Activated naive CD4-positive, alpha-beta T cell treated with anti-CD3 and anti-CD28 coated beads, Interleukin-2, amount 10 ng/mL, durations not matched to agents 7 days and 5 days (primary cell): ENCODE measurements at regions of chr7 and their contacts with region 1.

Region 1: GRCh38 chr7:2670720-2671391 is 17.1 kb upstream of the AMZ1 start:
- DNase-seq: peak; percentile 77
- H3K4me3 Mint-ChIP-seq: no peak overlapping the region
- H3K27ac Mint-ChIP-seq: no peak overlapping the region
- H3K4me1 Mint-ChIP-seq: peaks cover 11% of the 10 kb centered on the region
- H3K27me3 Mint-ChIP-seq: peaks cover 79% of the 10 kb centered on the region

Region 2: GRCh38 chr7:2519119-2519930 is 151.5 kb before region 1 on chr7 and contains the start of gene LFNG:
- CTCF ChIA-PET with region 1: no interaction called
- DNase-seq: peak; percentile 88
- H3K4me3 Mint-ChIP-seq: peak within 1 kb of the TSS; percentile 97
- H3K27ac Mint-ChIP-seq: peak within 1 kb of the TSS; percentile 88
- H3K4me1 Mint-ChIP-seq: peaks cover 34% of the 10 kb centered on the region
- H3K27me3 Mint-ChIP-seq: peaks cover 25% of the 10 kb centered on the region

Region 3: GRCh38 chr7:2567679-2568278 is 103.1 kb before region 1 on chr7:
- CTCF ChIA-PET with region 1: no interaction called
- DNase-seq: no peak
- H3K4me3 Mint-ChIP-seq: no peak overlapping the region
- H3K27ac Mint-ChIP-seq: no peak overlapping the region
- H3K4me1 Mint-ChIP-seq: peaks cover 2% of the 10 kb centered on the region
- H3K27me3 Mint-ChIP-seq: no peaks in the 10 kb centered on the region

Region 4: DNA sequence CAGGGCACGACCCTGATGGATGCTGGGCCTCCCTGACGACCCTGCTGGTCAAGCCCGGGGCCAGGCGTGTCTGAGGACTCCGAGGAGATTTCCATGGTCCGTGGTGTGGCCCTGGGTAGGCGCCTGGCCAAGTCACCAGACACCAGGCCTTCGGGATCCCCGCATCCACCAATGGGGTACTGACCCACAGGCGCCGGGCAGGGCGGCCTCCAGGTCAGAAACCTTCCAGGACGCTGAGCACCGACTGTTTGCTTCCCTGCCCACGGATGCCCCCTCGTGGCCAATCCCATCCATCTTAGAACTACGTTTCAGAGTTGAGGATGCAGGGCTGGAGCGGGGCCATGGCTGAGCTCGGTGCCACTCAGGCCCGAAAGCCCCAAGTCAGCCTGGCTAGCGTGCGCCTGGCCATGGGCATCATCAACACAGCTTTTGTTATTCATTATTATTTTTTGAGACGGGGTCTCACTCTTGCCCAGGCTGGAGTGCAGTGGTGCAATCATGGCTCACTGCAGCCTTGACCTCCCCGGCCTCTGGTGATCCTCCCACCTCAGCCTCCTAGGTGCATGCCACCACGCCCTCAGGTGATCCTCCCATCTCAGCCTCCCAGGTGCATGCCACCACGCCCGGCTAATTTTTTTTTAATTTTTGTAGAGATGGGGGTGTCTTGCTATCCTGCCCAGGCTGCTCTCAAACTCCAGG is 10.1 kb after region 1 on chr7:
- CTCF ChIA-PET with region 1: interaction called, 17 read pairs
- DNase-seq: peak; percentile 70
- H3K4me3 Mint-ChIP-seq: no peak overlapping the region
- H3K27ac Mint-ChIP-seq: no peak overlapping the region
- H3K4me1 Mint-ChIP-seq: no peaks in the 10 kb centered on the region
- H3K27me3 Mint-ChIP-seq: peaks cover 57% of the 10 kb centered on the region

Region 5: DNA sequence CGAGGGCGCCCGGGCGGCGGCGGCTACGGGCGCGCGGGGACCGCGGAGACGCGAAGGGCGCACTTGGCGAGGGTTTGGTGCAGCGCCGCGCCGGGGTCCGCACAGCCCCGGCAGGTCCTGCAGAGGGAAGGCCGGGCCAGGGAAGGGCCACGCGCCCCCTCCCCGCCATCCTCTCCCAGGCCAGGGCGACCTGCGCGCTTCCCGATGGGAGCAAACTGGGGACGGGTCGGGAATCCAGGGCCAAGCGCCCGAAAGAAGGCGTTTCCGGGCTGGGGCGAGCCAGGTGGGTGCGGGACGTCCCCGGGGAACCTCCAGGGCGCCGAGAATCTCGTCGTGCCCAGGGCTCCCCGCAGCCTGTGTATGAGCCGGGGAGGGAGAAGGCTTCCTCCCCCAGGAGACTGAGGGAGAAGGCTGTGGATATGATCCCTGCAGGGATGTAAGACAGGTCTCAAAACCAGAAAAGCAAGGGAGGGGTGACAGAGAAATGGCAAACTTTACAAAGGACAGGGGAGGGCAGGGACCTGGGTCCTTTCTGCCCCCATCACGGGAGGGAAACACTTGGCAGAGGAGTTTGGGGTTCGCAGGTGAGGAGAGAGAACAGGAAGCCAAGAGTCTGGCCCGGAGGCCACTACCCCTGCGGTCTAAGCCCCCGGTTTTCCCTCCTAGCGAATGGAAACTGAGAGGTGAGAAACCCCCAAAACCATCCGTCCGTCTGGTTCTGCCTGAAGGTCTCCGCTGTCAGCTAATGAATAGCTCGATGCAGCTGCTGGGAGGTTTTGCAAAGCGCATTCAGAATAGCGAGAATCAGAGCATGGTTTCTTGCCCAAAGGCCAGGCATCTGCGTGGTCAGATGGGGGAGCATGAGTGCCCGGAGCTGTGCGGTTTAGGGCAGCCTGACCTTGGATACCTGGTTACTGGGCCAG is 17.8 kb after region 1 on chr7:
- CTCF ChIA-PET with region 1: interaction called, 12 read pairs
- DNase-seq: no peak
- H3K4me3 Mint-ChIP-seq: no peak overlapping the region
- H3K27ac Mint-ChIP-seq: no peak overlapping the region
- H3K4me1 Mint-ChIP-seq: peaks cover 11% of the 10 kb centered on the region
- H3K27me3 Mint-ChIP-seq: peaks cover 89% of the 10 kb centered on the region

Region 6: DNA sequence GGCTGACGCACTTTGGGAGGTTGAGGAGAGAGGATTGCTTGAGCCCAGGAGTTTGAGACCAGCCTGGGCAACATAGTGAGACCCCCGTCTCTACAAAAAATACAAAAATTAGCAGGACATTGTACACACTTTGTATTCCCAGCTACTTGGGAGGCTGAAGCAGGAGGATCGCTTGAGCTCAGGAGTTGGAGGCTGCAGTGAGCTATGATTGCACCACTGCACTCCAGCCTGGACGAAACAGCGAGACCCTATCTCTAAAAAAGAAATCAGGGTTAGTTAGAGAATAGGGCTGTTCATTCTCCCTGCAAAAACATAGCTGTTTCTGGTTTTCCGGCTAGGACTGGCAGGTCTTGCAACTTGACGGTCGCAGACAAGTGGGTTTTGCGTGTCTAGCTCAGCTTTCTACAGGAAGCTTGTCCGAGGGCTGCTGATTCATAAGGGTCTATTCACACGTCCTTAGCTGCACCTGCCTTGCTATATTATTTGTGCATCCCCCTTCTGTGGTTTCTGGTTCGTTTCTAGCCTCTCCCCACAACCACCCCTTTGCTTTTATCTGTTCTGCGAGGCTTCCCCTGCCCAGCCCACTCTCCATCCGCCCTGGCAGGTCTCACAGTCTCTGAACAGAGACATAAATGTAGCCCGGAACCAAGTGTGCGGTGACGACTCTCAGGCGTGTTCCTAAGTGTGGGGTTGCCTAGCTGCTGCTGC is 27.9 kb after region 1 on chr7:
- CTCF ChIA-PET with region 1: interaction called, 222 read pairs
- DNase-seq: peak; percentile 84
- H3K4me3 Mint-ChIP-seq: peak overlapping the region; percentile 57
- H3K27ac Mint-ChIP-seq: peak overlapping the region; percentile 87
- H3K4me1 Mint-ChIP-seq: peaks cover 35% of the 10 kb centered on the region
- H3K27me3 Mint-ChIP-seq: peaks cover 62% of the 10 kb centered on the region